ENCODE measurements at regions of chr4 and their contacts with region 1.

Region 1: DNA sequence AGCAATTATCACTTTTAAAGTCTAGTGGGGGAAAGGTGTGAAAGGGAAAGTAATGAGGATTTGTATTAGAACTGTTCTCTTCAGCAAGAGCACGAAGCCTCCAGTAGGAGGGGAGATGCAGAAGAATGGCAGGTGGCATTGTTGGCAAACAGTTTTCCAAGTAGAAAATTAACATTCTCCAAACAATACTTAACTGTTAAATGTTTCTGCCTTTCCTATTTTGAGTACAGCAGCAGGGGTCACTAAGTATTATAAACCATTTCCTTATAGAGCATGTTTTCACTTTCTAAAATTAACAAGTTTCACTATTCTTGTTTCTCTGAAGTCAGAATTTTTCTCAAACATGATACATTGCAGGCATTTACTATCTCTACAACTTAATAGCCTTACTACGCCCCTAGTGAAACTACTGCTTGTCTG is 58.7 kb downstream of the LEF1 start:
- DNase-seq: no peak
- H3K4me3 ChIP-seq: no peak overlapping the region
- H3K4me3 Mint-ChIP-seq: peak overlapping the region; percentile 41 to 88 (median 73)
- H3K27ac ChIP-seq: peak overlapping the region; percentile 49
- H3K27ac Mint-ChIP-seq: peak overlapping the region; percentile 86 to 96 (median 90)
- H3K4me1 ChIP-seq: peaks cover 99% of the 10 kb centered on the region
- H3K4me1 Mint-ChIP-seq: peaks cover 81 to 98% (median 90%) of the 10 kb centered on the region in 4 donors
- H3K27me3 ChIP-seq: no peaks in the 10 kb centered on the region
- H3K27me3 Mint-ChIP-seq: no peaks in the 10 kb centered on the region

Region 2: DNA sequence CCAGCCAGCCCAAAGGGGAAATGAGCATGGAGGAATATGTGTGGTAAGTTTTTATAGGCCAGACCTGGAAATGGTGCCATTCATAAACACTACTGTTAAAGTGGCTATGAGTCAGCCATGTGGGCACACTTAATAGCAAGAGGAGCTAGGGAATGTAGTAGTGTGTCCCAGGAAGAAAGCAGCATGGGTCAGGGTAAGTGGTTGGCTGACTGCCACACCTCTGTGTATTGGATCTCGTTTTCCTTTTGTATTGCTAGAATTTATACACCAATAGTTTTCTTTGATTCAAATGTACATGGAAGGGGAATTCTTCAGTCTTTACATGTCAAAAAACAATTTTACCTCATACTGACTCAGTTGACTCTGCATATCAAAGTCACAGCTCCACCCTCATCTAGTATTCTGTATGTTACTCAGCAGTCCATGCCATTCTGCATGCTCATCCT is 308.2 kb before region 1 on chr4:
- CTCF ChIA-PET with region 1: no interaction called
- POLR2A ChIA-PET with region 1: no interaction called
- intact Hi-C with region 1: no loop called
- DNase-seq: no peak
- H3K4me3 ChIP-seq: no peak overlapping the region
- H3K4me3 Mint-ChIP-seq: no peak overlapping the region
- H3K27ac ChIP-seq: no peak overlapping the region
- H3K27ac Mint-ChIP-seq: no peak overlapping the region
- H3K4me1 ChIP-seq: no peaks in the 10 kb centered on the region
- H3K4me1 Mint-ChIP-seq: no peaks in the 10 kb centered on the region
- H3K27me3 ChIP-seq: no peaks in the 10 kb centered on the region
- H3K27me3 Mint-ChIP-seq: peaks cover 15 to 16% of the 10 kb centered on the region in 2 donors

Region 3: DNA sequence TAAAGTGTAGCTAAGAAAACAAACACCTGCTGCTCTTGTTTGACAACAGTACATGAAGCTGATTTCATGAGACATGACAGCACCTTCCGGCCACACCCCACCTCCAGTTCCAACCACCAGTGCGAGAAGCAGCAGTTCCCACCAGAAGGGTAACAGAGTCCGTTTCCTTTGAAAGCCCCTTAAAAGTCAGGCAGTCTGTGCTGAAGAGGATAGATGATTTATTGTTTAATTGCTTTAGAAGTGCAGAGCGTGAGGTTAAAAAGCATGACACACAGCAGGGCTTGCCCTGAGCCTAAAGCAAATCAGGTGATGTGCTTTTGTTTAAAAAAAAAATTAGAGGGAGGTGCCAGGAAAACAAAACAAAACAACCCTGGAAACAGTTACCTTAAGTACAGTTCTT is 37.7 kb before region 1 on chr4:
- CTCF ChIA-PET with region 1: interaction called, 9 read pairs
- POLR2A ChIA-PET with region 1: interaction called, 7 read pairs
- intact Hi-C with region 1: loop called (anchors 5 kb)
- DNase-seq: peak; percentile 58 to 87 (median 69)
- H3K4me3 ChIP-seq: no peak overlapping the region
- H3K4me3 Mint-ChIP-seq: peak overlapping the region in 7 of 8 donors; percentile 57 to 83 (median 78)
- H3K27ac ChIP-seq: peak overlapping the region; percentile 53
- H3K27ac Mint-ChIP-seq: peak overlapping the region; percentile 79 to 95 (median 94)
- H3K4me1 ChIP-seq: peaks cover 58% of the 10 kb centered on the region
- H3K4me1 Mint-ChIP-seq: peaks cover 36 to 74% (median 59%) of the 10 kb centered on the region in 4 donors
- H3K27me3 ChIP-seq: no peaks in the 10 kb centered on the region
- H3K27me3 Mint-ChIP-seq: no peaks in the 10 kb centered on the region

Region 4: GRCh38 chr4:108094923-108095482 is 15.0 kb before region 1 on chr4:
- CTCF ChIA-PET with region 1: interaction called, 8 read pairs
- POLR2A ChIA-PET with region 1: interaction called, 8 read pairs
- intact Hi-C with region 1: loop called (anchors 2 kb)
- DNase-seq: no peak
- H3K4me3 ChIP-seq: no peak overlapping the region
- H3K4me3 Mint-ChIP-seq: peak overlapping the region in 4 of 8 donors; percentile 38 to 50 (median 40)
- H3K27ac ChIP-seq: no peak overlapping the region
- H3K27ac Mint-ChIP-seq: peak overlapping the region in 6 of 7 donors; percentile 12 to 75 (median 64)
- H3K4me1 ChIP-seq: peaks cover 84% of the 10 kb centered on the region
- H3K4me1 Mint-ChIP-seq: peaks cover 50 to 84% (median 76%) of the 10 kb centered on the region in 4 donors
- H3K27me3 ChIP-seq: no peaks in the 10 kb centered on the region
- H3K27me3 Mint-ChIP-seq: no peaks in the 10 kb centered on the region

Region 5: DNA sequence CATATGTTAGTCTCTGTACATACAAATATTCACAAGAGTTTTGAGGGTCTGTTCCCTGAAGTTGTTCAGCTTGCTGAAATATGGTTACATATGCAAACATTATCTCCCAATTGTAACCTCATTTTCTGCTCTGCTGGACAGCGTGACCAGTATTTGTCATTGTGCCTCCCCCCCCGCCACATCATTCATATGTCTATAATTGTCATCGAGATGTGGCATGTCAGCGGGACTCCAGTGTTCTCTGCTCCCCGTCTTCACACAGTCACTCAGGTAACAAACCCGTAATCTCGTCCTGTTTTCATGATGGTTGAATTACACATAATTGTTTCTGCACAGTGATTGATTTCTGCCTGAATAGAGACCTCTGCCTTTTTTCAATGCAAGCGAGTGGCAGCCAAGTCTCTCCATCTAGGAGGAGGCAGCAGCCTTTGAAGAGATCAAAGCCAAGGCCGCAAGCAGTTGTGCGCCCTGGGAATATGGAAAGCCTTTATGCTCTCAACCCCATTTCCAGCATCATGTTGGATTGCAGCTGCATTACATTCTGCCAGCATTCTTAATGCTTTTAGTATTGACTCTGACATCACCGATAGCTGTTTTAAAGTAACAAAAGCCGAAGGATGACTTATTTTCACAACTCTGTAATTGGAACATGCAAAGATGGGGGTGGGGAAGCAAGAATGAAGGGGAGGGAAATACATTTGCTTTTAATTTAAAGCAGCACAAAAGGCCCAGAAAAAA is 31.4 kb after region 1 on chr4:
- CTCF ChIA-PET with region 1: interaction called, 3 read pairs
- POLR2A ChIA-PET with region 1: interaction called, 159 read pairs
- intact Hi-C with region 1: loop called (anchors 5 kb)
- DNase-seq: no peak
- H3K4me3 ChIP-seq: no peak overlapping the region
- H3K4me3 Mint-ChIP-seq: peak overlapping the region; percentile 32 to 84 (median 66)
- H3K27ac ChIP-seq: peak overlapping the region; percentile 6
- H3K27ac Mint-ChIP-seq: peak overlapping the region; percentile 44 to 87 (median 83)
- H3K4me1 ChIP-seq: peaks cover 100% of the 10 kb centered on the region
- H3K4me1 Mint-ChIP-seq: peaks cover 73 to 95% (median 82%) of the 10 kb centered on the region in 4 donors
- H3K27me3 ChIP-seq: no peaks in the 10 kb centered on the region
- H3K27me3 Mint-ChIP-seq: peaks cover 0 to 1% of the 10 kb centered on the region in 2 donors